Activated T-helper 2 cell treated with anti-CD3 and anti-CD28 coated beads, Interferon-gamma antibody, Interleukin-2, Interleukin-4, amounts not matched to agents 10 μg/mL and 5 μg/mL and 100 μg/mL, durations not matched to agents 14 hours and 24 hours and 36 hours (primary cell): ENCODE measurements at regions of chr15 and their contacts with region 1.

Region 1: GRCh38 chr15:47813748-47814384 is 96.6 kb downstream of the SEMA6D start:
- DNase-seq: no peak
- H3K4me3 Mint-ChIP-seq: no peak overlapping the region
- H3K27ac Mint-ChIP-seq: peak overlapping the region; percentile 24
- H3K4me1 Mint-ChIP-seq: peaks cover 20% of the 10 kb centered on the region
- H3K27me3 Mint-ChIP-seq: peaks cover 26% of the 10 kb centered on the region

Region 2: GRCh38 chr15:47736143-47736786 is 77.6 kb before region 1 on chr15:
- intact Hi-C with region 1: no loop called
- DNase-seq: no peak
- H3K4me3 Mint-ChIP-seq: no peak overlapping the region
- H3K27ac Mint-ChIP-seq: no peak overlapping the region
- H3K4me1 Mint-ChIP-seq: no peaks in the 10 kb centered on the region
- H3K27me3 Mint-ChIP-seq: no peaks in the 10 kb centered on the region

Region 3: DNA sequence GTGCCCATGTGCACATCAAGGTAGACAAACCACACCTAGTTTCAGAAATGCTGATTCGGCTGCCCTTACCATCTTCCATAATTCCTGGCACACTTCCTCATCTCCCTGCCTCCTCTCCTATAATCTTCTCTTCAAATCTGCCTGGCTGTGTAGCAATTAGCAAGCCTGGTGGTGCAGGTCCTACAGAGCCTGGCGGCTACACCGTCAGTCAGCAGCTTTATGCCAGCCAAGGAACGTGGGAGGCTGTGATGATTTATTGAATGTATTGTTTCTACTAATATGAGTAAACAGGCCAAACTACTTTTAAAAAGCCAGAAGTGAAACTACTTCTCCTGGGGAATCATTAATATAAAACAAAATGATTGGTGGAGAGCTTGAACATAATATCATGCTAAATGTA is 10.3 kb after region 1 on chr15:
- intact Hi-C with region 1: no loop called
- DNase-seq: no peak
- H3K4me3 Mint-ChIP-seq: no peak overlapping the region
- H3K27ac Mint-ChIP-seq: no peak overlapping the region
- H3K4me1 Mint-ChIP-seq: peaks cover 2% of the 10 kb centered on the region
- H3K27me3 Mint-ChIP-seq: peaks cover 14% of the 10 kb centered on the region

Region 4: GRCh38 chr15:47961401-47962090 is 147.7 kb after region 1 on chr15:
- intact Hi-C with region 1: loop called (anchors 2 kb)
- DNase-seq: peak; percentile 36
- H3K4me3 Mint-ChIP-seq: peak overlapping the region; percentile 43
- H3K27ac Mint-ChIP-seq: peak overlapping the region; percentile 5
- H3K4me1 Mint-ChIP-seq: peaks cover 33% of the 10 kb centered on the region
- H3K27me3 Mint-ChIP-seq: peaks cover 17% of the 10 kb centered on the region